Sciatic nerve (tissue), 2 donors: ENCODE measurements at regions of chr11 and their contacts with region 1.

Region 1: GRCh38 chr11:45301537-45302246 is 15.6 kb upstream of the SYT13 start:
- DNase-seq: no peak
- ATAC-seq: no peak

Region 2: GRCh38 chr11:44290208-44290607 is 1011.5 kb before region 1 on chr11:
- intact Hi-C with region 1: no loop called
- DNase-seq: no peak
- ATAC-seq: no peak

Region 3: GRCh38 chr11:44936525-44936924 is 365.2 kb before region 1 on chr11:
- intact Hi-C with region 1: loop called (anchors 10 kb)
- DNase-seq: peak; percentile 91
- ATAC-seq: peak; percentile 82

Region 4: DNA sequence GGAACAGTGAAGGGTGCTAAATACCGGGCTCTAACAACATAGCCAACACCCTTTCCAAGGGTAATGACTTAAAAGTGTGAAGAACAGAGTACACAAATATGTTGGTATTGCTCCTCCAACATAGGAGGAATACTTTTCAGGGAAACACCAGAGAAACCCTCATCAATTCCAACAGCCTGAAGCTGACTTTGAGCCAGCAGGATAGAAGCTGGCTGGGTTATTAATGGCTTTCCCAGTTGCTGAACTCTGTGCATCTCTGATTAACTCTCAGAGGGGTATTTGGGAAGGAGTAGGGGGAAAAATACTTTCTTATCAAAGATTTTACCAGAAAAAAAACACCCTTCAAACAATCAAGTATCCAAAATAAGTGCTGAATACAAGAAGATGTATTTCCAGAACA is 1196.5 kb after region 1 on chr11:
- intact Hi-C with region 1: loop called (anchors 5 kb)
- DNase-seq: no peak
- ATAC-seq: no peak